HepG2 (cell line): ENCODE measurements at regions of chr18 and their contacts with region 1.

Region 1: DNA sequence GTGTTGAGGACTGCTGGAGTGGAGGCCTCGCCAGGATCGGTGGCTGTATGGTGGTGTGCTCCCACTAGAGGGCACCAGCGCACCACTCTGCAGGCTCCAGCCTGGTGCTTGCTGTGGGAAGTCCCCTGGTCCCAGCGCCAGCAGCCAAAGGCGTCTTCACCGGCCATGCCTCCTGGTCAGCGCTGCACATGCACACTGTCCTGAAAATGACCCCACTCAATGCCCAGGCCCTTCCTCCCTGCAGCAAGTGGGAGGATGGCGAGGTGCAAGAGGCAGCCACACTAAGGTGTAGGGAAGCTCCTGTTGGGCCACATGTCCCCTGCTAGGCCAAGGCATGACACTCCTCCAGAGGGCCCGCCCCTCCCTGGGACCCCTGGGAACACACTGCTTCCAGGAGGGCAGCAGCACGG is 136.5 kb downstream of the CTIF start:
- DNase-seq: peak; percentile 58
- ATAC-seq: peak; percentile 96
- H3K4me3 ChIP-seq: no peak overlapping the region
- H3K27ac ChIP-seq: no peak overlapping the region
- H3K4me1 ChIP-seq: peaks cover 39% of the 10 kb centered on the region
- H3K27me3 ChIP-seq: no peaks in the 10 kb centered on the region
- CTCF ChIP-seq: peak; percentile 99
- EP300 ChIP-seq: no peak
- POLR2A ChIP-seq: no peak
- RAD21 ChIP-seq: peak; percentile 97

Region 2: DNA sequence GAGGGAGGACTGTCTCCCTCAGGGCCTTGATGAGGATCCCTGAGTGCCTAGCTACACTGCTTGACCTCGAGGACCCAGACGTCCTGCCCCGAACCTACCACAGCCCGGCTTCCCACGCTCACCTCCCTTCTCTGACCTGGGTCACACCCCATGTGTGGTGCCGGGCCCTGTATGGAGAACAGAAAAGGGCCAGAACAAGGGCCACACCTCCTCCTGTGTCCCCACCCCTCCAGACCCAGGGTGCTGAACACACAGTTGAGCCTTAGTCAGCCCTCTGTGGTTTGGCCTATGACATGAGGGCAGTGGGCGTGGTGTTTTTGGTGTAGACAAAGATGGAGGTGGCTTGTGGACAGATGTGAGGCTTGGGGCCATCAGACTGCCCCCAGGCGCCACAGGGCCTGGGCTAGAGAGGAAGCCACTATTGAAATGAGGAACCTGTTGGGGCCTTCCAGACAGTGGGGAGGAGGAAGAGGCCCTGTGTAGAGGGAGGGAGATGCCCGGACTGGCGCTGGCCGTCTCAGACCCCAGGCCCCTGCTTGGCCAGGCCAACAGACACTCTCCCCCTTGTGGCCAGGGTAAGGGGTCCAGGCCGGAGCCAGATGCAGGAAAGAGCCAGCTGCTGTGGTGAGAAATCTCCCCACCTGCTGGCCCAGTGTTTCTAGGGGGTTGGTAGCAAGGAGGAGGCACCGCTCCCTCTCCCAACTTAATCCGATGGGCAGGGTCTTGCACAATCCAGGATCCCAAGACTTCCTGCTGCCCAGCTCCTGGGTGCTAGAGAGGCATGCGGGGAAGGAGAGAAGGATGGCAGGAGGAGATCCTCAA is 221.5 kb after region 1 on chr18:
- CTCF ChIA-PET with region 1: interaction called, 3 read pairs
- POLR2A ChIA-PET with region 1: no interaction called
- in situ Hi-C with region 1: loop called (anchors 5 kb)
- intact Hi-C with region 1: loop called (anchors 5 kb)
- DNase-seq: peak; percentile 98
- ATAC-seq: peak; percentile 81
- H3K4me3 ChIP-seq: peak overlapping the region; percentile 22 to 61 (median 42); a peak in 5 of 6 replicates
- H3K27ac ChIP-seq: peak overlapping the region; percentile 41
- H3K4me1 ChIP-seq: peaks cover 71% of the 10 kb centered on the region
- H3K27me3 ChIP-seq: no peaks in the 10 kb centered on the region; a peak in 1 of 5 replicates
- CTCF ChIP-seq: peak; percentile 84
- EP300 ChIP-seq: peak in 1 of 2 experiments; percentile 37; a peak in 1 of 4 replicates
- POLR2A ChIP-seq: no peak
- RAD21 ChIP-seq: peak; percentile 96

Region 3: DNA sequence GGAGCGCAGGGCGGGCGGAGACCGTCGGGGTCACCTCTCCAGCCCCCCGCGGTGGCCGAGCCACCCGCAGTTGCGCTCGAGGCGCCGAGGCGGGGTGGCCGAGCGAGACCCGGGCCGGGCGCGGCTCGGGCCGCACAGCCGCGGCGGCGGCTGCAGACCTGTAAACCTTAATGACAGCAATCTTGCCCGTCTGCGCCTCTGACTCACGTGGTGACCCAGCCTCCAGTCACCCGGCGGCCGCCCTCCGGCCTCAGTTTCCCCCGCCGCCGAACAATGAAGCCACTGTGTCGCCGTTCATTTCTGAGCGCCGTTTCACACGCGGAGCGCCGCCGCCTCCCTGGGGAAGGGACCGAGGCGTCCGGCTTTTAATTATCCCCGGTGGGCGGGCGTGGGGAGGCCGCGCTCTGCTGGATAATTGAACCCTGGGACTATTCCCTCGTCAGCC is 300.9 kb after region 1 on chr18:
- CTCF ChIA-PET with region 1: no interaction called
- POLR2A ChIA-PET with region 1: no interaction called
- in situ Hi-C with region 1: no loop called
- intact Hi-C with region 1: no loop called
- DNase-seq: no peak
- ATAC-seq: no peak
- H3K4me3 ChIP-seq: peak overlapping the region; percentile 59 to 74 (median 68)
- H3K27ac ChIP-seq: no peak overlapping the region
- H3K4me1 ChIP-seq: peaks cover 46% of the 10 kb centered on the region
- H3K27me3 ChIP-seq: peaks cover 2 to 18% of the 10 kb centered on the region in 2 experiments
- CTCF ChIP-seq: no peak
- EP300 ChIP-seq: no peak
- POLR2A ChIP-seq: no peak
- RAD21 ChIP-seq: peak; percentile 50; the same call in 1 of the 2 replicates

Region 4: DNA sequence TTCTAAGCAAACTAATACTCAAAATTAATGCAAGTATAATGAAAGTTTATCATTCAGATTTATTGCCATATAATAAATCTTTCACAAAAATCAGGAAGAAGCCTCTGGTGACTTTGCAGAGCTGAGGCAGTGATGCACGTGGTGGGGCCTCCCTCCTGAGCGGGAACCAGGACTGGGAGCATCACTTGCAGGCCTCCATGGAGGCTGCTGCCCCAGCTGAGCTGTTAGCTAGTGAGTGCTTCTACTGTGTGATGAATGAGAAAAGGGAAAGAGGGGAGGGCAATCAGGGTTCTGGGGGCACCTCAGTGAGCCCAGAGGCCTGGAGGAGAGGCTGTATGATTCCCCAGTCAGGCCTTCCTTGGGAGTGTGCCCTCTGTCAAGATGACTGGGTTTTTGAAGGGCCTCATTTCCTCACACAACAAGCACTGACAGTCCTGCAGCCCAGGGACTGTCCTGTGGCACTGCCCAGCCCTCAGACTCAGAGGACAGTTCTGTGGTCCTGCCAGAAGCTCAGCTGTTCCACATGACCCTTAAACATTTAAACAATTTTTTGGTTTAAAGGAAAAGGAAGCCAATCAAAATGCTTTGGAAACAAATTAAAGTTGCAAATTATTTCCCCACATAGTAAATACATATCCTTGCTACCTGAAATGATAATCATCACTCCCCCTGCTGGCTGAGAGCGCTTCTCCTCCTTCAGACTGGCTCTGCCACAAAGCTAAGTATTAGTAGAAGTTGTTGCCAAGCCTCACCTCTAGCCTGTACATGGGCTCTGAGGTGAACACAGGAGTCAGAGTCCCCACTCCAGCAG is 366.3 kb after region 1 on chr18:
- CTCF ChIA-PET with region 1: interaction called, 6 read pairs
- POLR2A ChIA-PET with region 1: no interaction called
- in situ Hi-C with region 1: no loop called
- intact Hi-C with region 1: loop called (anchors 1 kb)
- DNase-seq: peak; percentile 40
- ATAC-seq: peak; percentile 85
- H3K4me3 ChIP-seq: no peak overlapping the region
- H3K27ac ChIP-seq: no peak overlapping the region
- H3K4me1 ChIP-seq: no peaks in the 10 kb centered on the region
- H3K27me3 ChIP-seq: no peaks in the 10 kb centered on the region
- CTCF ChIP-seq: peak; percentile 65
- EP300 ChIP-seq: no peak
- POLR2A ChIP-seq: no peak
- RAD21 ChIP-seq: 0 out of 2 replicates have a peak, but pooled peaks have one; percentile 42

Region 5: GRCh38 chr18:49178736-49179135 is 503.4 kb after region 1 on chr18:
- CTCF ChIA-PET with region 1: interaction called, 3 read pairs
- POLR2A ChIA-PET with region 1: no interaction called
- in situ Hi-C with region 1: no loop called
- intact Hi-C with region 1: loop called (anchors 1 kb)
- DNase-seq: peak; percentile 36
- ATAC-seq: peak; percentile 56
- H3K4me3 ChIP-seq: no peak overlapping the region
- H3K27ac ChIP-seq: no peak overlapping the region
- H3K4me1 ChIP-seq: peaks cover 20% of the 10 kb centered on the region
- H3K27me3 ChIP-seq: no peaks in the 10 kb centered on the region
- CTCF ChIP-seq: peak; percentile 68
- EP300 ChIP-seq: no peak
- POLR2A ChIP-seq: no peak
- RAD21 ChIP-seq: peak; percentile 59

Region 6: DNA sequence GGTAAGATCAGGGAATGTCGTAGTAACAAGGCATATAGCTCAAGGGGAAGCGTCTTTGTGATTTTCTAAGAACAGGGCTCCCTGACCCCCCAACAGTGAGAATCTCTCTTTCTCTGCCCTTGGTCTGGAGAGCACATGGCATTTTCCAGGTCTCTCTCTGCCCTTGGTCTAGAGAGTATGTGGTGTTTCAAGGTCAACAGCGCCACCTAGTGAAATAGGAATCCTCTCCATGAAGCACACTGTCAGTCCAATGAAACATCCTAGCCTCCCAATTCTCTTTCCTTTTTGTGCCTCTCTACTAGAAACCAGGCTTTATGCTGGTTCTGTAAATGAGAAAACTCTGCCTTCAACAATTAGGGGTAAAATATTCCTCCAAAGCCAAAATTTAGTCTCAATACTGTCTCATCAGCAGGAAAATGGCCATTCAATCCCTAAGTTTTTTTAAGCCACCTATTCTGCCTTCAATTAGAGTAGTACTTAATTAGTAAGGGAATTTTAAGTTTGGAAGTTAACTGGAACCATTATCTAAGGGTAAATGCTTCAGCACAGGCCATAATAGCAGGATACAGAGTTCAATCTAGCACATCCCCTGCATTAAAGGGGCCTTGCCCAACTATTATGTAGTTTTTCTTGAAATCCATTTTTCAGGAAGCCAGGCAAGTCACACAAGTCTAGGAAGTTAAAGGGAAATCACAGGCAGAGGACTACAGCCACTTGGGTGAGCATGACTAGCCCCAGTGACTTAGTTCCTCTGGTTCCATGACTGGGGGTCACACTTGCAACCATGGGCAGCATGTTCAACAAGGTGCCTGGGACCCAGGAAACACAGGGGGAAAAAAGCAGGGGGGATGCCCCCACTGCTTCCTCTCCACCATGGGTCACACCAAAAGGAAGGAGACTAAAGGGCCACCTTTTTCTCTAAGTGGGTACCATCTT is 772.7 kb after region 1 on chr18:
- CTCF ChIA-PET with region 1: interaction called, 3 read pairs
- POLR2A ChIA-PET with region 1: no interaction called
- in situ Hi-C with region 1: loop called (anchors 25 kb)
- intact Hi-C with region 1: loop called (anchors 5 kb)
- DNase-seq: peak; percentile 76
- ATAC-seq: peak; percentile 98
- H3K4me3 ChIP-seq: no peak overlapping the region
- H3K27ac ChIP-seq: no peak overlapping the region
- H3K4me1 ChIP-seq: peaks cover 13% of the 10 kb centered on the region; the same call in 1 of the 2 replicates
- H3K27me3 ChIP-seq: no peaks in the 10 kb centered on the region
- CTCF ChIP-seq: peak; percentile 85
- EP300 ChIP-seq: no peak
- POLR2A ChIP-seq: no peak
- RAD21 ChIP-seq: peak; percentile 67